Activated CD4-positive, alpha-beta T cell treated with anti-CD3 and anti-CD28 coated beads, Interleukin-2, amount 10 ng/mL, durations not matched to agents 24 days and 14 days (primary cell): ENCODE measurements at regions of chr11 and their contacts with region 1.

Region 1: DNA sequence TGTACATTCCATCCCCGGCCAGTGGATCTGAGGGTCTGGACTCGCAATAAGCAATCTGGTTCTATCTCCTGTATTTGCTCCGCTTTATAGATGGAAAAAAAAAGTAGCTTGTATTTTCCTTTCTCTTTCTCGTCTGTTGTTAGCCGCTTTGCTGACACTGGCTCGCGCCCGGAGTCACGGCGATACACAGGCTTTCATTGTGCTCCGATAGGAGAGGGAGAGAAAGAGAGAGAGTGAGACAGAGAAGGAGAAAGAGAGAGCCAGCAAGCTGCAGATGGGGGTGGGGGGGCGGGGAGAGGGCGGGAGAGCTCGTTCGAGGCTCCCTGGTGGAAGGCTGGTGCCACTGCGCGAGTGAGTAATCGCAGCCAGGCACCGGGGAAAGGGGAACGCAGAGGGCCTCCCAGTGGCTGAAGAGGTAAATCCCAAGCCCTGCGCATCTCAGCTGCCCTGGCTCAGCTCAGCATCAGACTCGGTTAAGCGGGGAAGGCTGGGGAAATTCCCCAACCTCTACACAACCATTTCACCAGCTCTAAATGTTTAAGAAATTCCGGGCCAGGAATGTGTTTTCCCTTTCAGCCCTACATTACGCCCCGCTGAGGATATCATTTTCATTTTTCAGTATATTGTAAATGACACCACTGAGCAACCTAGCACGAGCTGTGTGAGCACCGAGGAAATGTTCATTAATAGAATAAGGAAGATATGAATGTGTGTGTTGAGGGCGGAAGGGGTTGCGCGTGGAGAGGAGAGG is at the start of gene MAML2:
- DNase-seq: peak; percentile 96
- H3K4me3 Mint-ChIP-seq: peak within 1 kb of the TSS; percentile 95
- H3K27ac Mint-ChIP-seq: peak within 1 kb of the TSS; percentile 93
- H3K4me1 Mint-ChIP-seq: peaks cover 43% of the 10 kb centered on the region
- H3K27me3 Mint-ChIP-seq: no peaks in the 10 kb centered on the region
- total RNA-seq, gene MAML2: 11.9 and 12.4 TPM in 2 replicates

Region 2: GRCh38 chr11:95835768-95836488 is 507.2 kb before region 1 on chr11:
- intact Hi-C with region 1: loop called (anchors 5 kb)
- DNase-seq: peak; percentile 87
- H3K4me3 Mint-ChIP-seq: no peak overlapping the region
- H3K27ac Mint-ChIP-seq: no peak overlapping the region
- H3K4me1 Mint-ChIP-seq: no peaks in the 10 kb centered on the region
- H3K27me3 Mint-ChIP-seq: no peaks in the 10 kb centered on the region

Region 3: DNA sequence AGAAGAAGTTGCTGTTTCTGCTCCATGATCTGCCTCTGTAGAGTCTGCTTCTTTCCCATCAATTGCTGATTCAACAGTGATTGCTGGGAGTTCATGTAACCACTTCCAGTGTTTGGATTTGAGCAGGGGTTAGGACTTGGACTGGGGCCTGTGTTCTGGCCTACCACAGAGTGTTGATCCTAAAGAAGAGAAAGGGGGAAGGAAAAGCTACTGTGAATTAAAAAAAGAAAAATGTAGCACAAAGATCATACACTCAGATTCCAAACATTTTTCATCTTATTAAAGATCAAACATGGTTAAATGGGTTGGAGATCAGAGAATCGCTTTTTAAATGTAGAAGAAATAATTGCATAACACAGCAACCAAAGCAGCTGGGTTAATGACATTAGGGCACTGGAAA is 351.6 kb before region 1 on chr11:
- intact Hi-C with region 1: no loop called
- DNase-seq: no peak
- H3K4me3 Mint-ChIP-seq: no peak overlapping the region
- H3K27ac Mint-ChIP-seq: no peak overlapping the region
- H3K4me1 Mint-ChIP-seq: peaks cover 12% of the 10 kb centered on the region
- H3K27me3 Mint-ChIP-seq: no peaks in the 10 kb centered on the region

Region 4: DNA sequence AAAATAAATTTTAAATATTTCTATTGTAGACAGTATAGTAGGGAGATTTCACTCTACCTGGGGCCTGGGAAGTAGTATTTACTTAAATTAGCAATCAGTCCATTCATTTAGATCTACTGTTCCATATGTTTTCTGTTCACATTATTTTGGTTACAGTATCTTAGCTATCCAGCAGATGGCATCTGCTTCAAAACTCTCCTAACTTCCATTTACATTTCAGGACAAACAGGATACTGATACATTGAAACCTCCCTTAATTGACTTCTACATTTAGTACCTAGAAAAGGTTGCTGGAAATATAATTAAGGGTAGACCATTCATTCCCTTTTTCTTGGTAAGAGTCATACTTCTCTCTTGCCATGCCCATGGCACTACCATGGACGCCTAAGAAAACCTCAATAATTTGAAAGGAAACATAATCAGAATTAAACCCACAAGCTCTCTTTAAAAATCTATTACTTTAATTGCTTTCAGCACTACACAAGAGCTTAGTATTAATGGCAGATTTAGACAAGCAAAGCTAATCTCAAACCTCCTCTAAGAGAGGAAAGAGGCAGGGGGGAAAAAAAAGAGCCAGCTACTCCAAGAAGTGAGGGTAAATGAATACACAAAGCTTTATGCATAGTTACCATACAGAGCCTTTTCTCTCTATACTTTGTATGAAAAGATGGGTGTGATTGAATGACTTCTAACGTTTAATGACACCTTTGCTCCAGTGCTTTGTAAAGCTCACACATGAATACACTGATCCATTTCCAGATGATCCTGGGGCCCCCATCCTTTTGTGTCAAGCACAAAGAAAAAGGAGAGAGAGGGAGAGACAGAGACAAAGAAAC is 288.0 kb before region 1 on chr11:
- intact Hi-C with region 1: loop called (anchors 2 kb)
- DNase-seq: no peak
- H3K4me3 Mint-ChIP-seq: no peak overlapping the region
- H3K27ac Mint-ChIP-seq: peak overlapping the region; percentile 51
- H3K4me1 Mint-ChIP-seq: peaks cover 35% of the 10 kb centered on the region
- H3K27me3 Mint-ChIP-seq: no peaks in the 10 kb centered on the region

Region 5: GRCh38 chr11:96155627-96156378 is 187.3 kb before region 1 on chr11:
- intact Hi-C with region 1: loop called (anchors 1 kb)
- DNase-seq: peak; percentile 79
- H3K4me3 Mint-ChIP-seq: peak overlapping the region; percentile 65
- H3K27ac Mint-ChIP-seq: peak overlapping the region; percentile 95
- H3K4me1 Mint-ChIP-seq: peaks cover 54% of the 10 kb centered on the region
- H3K27me3 Mint-ChIP-seq: no peaks in the 10 kb centered on the region

Region 6: DNA sequence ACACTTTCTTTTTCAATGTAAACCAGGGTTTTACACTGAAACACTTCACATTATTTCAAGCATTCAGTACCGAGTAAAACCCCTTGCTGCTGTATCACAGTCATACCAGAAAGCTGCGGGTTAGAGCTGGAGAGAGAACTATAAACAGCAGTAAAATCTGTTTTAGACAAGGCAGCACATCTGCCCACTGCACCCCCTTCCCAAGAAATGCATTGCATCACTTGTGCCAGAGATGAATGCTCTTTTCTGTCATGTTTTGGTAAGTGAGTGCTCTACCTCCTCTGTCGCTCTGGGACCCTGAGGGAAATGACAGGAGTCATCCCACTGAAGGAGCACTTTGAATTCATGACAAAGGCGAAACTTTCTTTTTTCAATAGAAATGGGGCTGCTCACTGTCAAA is 107.4 kb before region 1 on chr11:
- intact Hi-C with region 1: loop called (anchors 1 kb)
- DNase-seq: peak; percentile 86
- H3K4me3 Mint-ChIP-seq: peak overlapping the region; percentile 76
- H3K27ac Mint-ChIP-seq: peak overlapping the region; percentile 95
- H3K4me1 Mint-ChIP-seq: peaks cover 30% of the 10 kb centered on the region
- H3K27me3 Mint-ChIP-seq: no peaks in the 10 kb centered on the region

Region 7: DNA sequence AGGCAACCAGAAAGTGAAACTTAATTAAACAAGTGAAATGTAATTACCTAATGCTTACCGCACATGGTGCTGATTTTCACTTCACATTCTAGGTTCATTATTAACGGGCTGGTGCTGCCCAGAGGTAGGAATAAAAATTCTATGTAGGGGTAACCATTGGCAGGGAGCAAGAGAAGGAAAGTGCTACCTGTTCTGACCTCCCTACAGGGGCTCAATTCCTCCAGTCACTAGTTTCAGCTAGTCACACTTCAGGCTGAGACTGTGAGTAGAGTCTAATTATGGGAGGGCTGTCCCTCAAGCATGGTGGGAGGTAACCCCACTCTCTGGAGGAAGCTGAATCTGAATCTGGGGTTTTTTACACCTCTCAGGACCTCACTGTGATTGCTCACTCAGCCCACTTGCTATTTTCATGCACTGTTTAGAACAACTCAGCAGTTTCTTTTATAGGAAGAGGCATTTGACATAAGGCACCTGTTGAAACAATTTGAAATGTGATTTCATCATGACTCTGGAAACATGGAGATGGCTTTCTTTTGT is 75.6 kb before region 1 on chr11:
- intact Hi-C with region 1: loop called (anchors 2 kb)
- DNase-seq: peak; percentile 75
- H3K4me3 Mint-ChIP-seq: peak overlapping the region; percentile 44
- H3K27ac Mint-ChIP-seq: peak overlapping the region; percentile 78
- H3K4me1 Mint-ChIP-seq: peaks cover 57% of the 10 kb centered on the region
- H3K27me3 Mint-ChIP-seq: no peaks in the 10 kb centered on the region

Region 8: GRCh38 chr11:96389720-96390487 is 46.8 kb after region 1 on chr11 and contains the starts of genes CCDC82 and JRKL:
- intact Hi-C with region 1: loop called (anchors 1 kb)
- DNase-seq: peak; percentile 99
- H3K4me3 Mint-ChIP-seq: peak within 1 kb of the TSS; percentile 93
- H3K27ac Mint-ChIP-seq: peak within 1 kb of the TSS; percentile 96
- H3K4me1 Mint-ChIP-seq: peaks cover 52% of the 10 kb centered on the region
- H3K27me3 Mint-ChIP-seq: no peaks in the 10 kb centered on the region
- total RNA-seq, gene CCDC82: 27.6 and 31.8 TPM in 2 replicates
- total RNA-seq, gene JRKL: 9.9 and 11.9 TPM in 2 replicates